Endothelial cell of umbilical vein (primary cell): ENCODE measurements at regions of chr17 and their contacts with region 1.

Region 1: GRCh38 chr17:76370261-76370993 is 14.0 kb upstream of the SPHK1 start:
- DNase-seq: peak; percentile 92
- H3K4me3 ChIP-seq: no peak overlapping the region
- H3K27ac ChIP-seq: peak overlapping the region; percentile 97
- H3K4me1 ChIP-seq: peaks cover 28% of the 10 kb centered on the region
- H3K27me3 ChIP-seq: no peaks in the 10 kb centered on the region
- CTCF ChIP-seq: peak; percentile 56 to 62
- POLR2A ChIP-seq: no peak

Region 2: DNA sequence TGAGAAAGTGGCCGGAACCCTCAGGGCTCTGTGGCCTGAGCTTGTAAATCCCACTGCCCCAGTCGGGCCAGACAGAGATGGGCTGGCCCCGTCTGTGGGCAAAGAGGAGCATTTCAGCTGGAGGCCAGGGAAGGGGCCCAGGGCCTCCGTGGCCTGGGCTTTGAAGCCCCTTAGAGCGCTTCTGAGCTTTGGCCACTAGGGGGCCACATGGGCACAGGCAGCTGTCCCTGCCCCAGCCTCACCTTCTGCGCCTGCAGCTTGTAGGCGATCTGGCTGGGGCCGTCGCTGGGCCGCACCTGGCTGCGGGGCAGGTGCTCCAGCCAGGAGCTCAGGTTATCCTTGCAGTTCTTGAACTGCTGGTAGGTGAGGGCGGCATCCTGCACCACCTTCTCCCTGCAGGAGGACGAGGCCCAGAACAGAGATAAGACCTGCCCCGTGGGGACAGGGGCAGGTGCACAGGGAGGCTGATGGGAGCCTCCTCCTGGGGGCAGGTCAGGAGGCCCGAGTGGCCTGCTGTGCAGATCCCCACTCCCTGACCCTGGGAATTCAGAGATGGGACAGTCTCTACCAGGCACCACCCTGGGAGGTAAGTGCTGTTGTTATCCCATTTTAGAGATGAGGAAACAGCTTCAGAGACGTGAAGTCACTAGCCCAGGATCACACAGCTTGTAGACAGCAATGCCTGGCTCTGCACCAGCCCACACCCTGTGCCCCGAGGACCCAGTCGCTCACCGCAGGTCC is 356.1 kb before region 1 on chr17:
- CTCF ChIA-PET with region 1: no interaction called
- POLR2A ChIA-PET with region 1: no interaction called
- dilution Hi-C with region 1: no loop called
- intact Hi-C with region 1: no loop called
- DNase-seq: peak; percentile 59
- H3K4me3 ChIP-seq: no peak overlapping the region
- H3K27ac ChIP-seq: no peak overlapping the region
- H3K4me1 ChIP-seq: no peaks in the 10 kb centered on the region
- H3K27me3 ChIP-seq: no peaks in the 10 kb centered on the region
- CTCF ChIP-seq: peak; percentile 89 to 99
- POLR2A ChIP-seq: no peak

Region 3: GRCh38 chr17:76307299-76307965 is 63.0 kb before region 1 on chr17:
- CTCF ChIA-PET with region 1: interaction called, 17 read pairs
- POLR2A ChIA-PET with region 1: no interaction called
- dilution Hi-C with region 1: no loop called
- intact Hi-C with region 1: no loop called
- DNase-seq: no peak
- H3K4me3 ChIP-seq: no peak overlapping the region
- H3K27ac ChIP-seq: no peak overlapping the region
- H3K4me1 ChIP-seq: no peaks in the 10 kb centered on the region
- H3K27me3 ChIP-seq: no peaks in the 10 kb centered on the region
- CTCF ChIP-seq: no peak
- POLR2A ChIP-seq: no peak

Region 4: DNA sequence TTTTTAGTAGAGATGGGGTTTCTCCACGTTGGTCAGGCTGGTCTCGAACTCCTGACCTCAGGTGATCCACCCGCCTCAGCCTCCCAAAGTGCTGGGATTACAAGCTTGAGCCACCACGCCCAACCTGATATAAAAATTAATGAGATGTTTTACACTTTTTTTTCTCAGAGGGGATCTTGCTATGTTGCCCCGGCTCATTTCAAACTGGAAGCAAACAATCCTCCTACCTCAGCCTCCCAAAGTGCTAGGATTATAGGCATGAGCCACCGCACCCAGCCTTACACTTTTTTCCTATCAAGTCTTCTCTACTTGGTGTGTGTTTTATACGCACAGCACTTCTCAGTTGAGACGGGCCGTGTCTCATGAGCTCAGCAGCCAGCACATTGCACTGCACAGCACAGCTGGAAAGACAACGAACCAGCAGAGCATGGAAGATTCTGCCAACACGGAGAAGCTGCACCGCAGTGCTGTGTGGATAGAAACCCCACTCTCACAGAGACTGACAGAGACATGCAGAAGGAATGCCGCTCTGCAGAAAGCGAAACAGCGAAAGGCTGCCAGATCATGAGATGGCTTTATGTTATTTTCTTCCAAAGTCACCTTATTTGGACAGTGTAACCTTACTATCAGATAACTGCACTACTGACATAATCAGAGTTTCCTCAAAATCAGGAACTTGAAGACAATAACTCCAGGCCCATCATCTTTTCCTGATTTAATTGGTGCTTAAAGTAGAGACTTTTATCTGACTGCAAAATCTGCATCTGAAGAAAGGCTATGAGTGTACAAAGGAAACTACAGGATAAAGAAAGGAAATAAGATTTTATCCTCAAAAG is 55.8 kb before region 1 on chr17:
- CTCF ChIA-PET with region 1: interaction called, 4 read pairs
- POLR2A ChIA-PET with region 1: no interaction called
- dilution Hi-C with region 1: no loop called
- intact Hi-C with region 1: loop called (anchors 1 kb)
- DNase-seq: peak; percentile 88
- H3K4me3 ChIP-seq: peak overlapping the region in 1 of 3 experiments; percentile 23
- H3K27ac ChIP-seq: peak overlapping the region; percentile 71
- H3K4me1 ChIP-seq: peaks cover 30% of the 10 kb centered on the region
- H3K27me3 ChIP-seq: no peaks in the 10 kb centered on the region
- CTCF ChIP-seq: no peak
- POLR2A ChIP-seq: no peak